Thyroid gland (tissue), 4 donors: ENCODE measurements at regions of chrX and their contacts with region 1.

Region 1: GRCh38 chrX:13658602-13659001 is 5.7 kb downstream of the TCEANC start:
- DNase-seq: no peak
- H3K4me3 ChIP-seq: no peak overlapping the region
- H3K27ac ChIP-seq: peak overlapping the region in 1 of 3 donors; percentile 47
- H3K4me1 ChIP-seq: peaks cover 4 to 5% of the 10 kb centered on the region in 2 donors
- H3K27me3 ChIP-seq: no peaks in the 10 kb centered on the region
- CTCF ChIP-seq: peak in 5 of 6 experiments; percentile 51 to 79 (median 63)
- POLR2A ChIP-seq: no peak

Region 2: DNA sequence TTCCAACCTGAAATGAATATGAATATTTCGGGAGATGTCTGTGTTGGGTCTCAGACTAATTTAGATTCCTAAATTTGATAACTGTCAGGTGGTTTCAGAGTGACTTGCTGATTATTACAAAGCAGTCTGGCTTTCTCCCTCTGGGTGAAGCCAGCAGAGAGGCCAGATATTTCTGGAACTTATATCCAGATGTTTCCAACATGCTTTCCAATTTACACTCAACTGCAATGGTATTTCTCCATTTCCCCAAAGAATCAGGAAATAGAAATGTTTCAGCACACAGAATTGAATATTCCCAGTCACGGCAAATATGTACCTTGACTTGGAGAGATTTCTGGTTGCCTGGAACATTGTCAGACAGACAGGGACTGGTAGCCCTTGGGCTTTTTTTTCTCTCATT is 137.7 kb before region 1 on chrX:
- intact Hi-C with region 1: no loop called
- DNase-seq: no peak
- H3K4me3 ChIP-seq: no peak overlapping the region
- H3K27ac ChIP-seq: no peak overlapping the region
- H3K4me1 ChIP-seq: no peaks in the 10 kb centered on the region
- H3K27me3 ChIP-seq: no peaks in the 10 kb centered on the region
- CTCF ChIP-seq: no peak
- POLR2A ChIP-seq: no peak

Region 3: DNA sequence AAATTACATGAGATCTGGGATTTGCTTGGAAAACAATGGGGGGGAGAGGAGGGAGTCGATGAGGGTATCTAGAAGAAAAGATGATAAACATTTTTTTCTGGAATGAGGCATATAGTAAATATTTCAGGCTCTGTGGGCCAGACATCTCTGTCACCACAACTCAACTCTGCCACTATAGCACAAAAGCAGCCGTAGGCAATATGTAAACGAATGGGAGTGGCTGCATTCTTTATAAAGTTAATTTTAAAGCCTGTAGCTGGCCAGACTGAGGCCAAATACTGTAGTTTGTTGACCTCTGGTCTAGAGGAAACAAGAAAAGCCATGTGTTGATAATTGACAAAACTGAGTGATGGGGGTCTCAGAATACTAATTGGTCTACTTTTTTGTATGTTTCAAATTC is 19.8 kb before region 1 on chrX:
- intact Hi-C with region 1: no loop called
- DNase-seq: no peak
- H3K4me3 ChIP-seq: no peak overlapping the region
- H3K27ac ChIP-seq: no peak overlapping the region
- H3K4me1 ChIP-seq: no peaks in the 10 kb centered on the region
- H3K27me3 ChIP-seq: no peaks in the 10 kb centered on the region
- CTCF ChIP-seq: no peak
- POLR2A ChIP-seq: no peak

Region 4: GRCh38 chrX:13747836-13748235 is 89.2 kb after region 1 on chrX:
- intact Hi-C with region 1: loop called (anchors 5 kb)
- DNase-seq: peak; percentile 23 to 30
- H3K4me3 ChIP-seq: no peak overlapping the region
- H3K27ac ChIP-seq: no peak overlapping the region
- H3K4me1 ChIP-seq: no peaks in the 10 kb centered on the region
- H3K27me3 ChIP-seq: no peaks in the 10 kb centered on the region
- CTCF ChIP-seq: peak in 2 of 6 experiments; percentile 12 to 28
- POLR2A ChIP-seq: no peak

Region 5: DNA sequence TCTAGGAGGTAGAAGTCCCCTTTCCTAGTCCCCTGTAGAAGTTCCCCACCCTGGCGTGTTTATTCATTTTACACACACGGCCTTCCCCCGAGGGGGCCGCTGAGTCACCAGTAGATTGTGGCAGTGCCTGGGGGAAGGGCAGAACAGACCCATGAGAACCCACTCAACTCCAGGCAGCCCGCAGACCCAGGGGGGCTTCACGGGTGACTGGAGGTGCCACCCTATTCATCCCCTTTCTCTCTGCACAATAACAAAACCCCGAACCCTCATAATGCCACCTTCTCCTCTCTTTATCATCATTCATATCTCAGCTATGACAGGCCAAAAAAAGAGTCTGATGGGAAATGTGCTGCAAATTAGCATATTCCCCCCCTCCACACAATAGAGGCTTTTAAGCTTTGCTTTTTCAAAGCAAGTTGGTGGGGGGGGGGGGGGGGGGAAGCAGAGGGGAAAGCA is 178.7 kb after region 1 on chrX:
- intact Hi-C with region 1: no loop called
- DNase-seq: no peak
- H3K4me3 ChIP-seq: no peak overlapping the region
- H3K27ac ChIP-seq: no peak overlapping the region
- H3K4me1 ChIP-seq: no peaks in the 10 kb centered on the region
- H3K27me3 ChIP-seq: no peaks in the 10 kb centered on the region
- CTCF ChIP-seq: no peak
- POLR2A ChIP-seq: no peak

Region 6: GRCh38 chrX:14029425-14030173 is 371.0 kb after region 1 on chrX and contains the start of gene GEMIN8:
- intact Hi-C with region 1: loop called (anchors 5 kb)
- DNase-seq: peak; percentile 83 to 84
- H3K4me3 ChIP-seq: peak within 1 kb of the TSS in 2 of 3 donors; percentile 44 to 46
- H3K27ac ChIP-seq: peak within 1 kb of the TSS; percentile 51 to 75 (median 61)
- H3K4me1 ChIP-seq: peaks cover 0 to 10% of the 10 kb centered on the region in 2 donors
- H3K27me3 ChIP-seq: no peaks in the 10 kb centered on the region
- CTCF ChIP-seq: no peak
- POLR2A ChIP-seq: peak in 1 of 2 donors; percentile 85
- total RNA-seq, gene GEMIN8: 13.9 to 50.7 (median 30.0) TPM